ENCODE measurements at regions of chr17 and their contacts with region 1.

Region 1: GRCh38 chr17:3636154-3636907 is at the starts of genes CTNS and SHPK:
- DNase-seq: peak; percentile 96
- H3K4me3 Mint-ChIP-seq: peak within 1 kb of the TSS; percentile 96
- H3K27ac Mint-ChIP-seq: peak within 1 kb of the TSS; percentile 98
- H3K4me1 Mint-ChIP-seq: peaks cover 49% of the 10 kb centered on the region
- H3K27me3 Mint-ChIP-seq: no peaks in the 10 kb centered on the region
- total RNA-seq, gene CTNS: 24.5 to 26.5 TPM
- total RNA-seq, gene SHPK: 10.4 TPM

Region 2: DNA sequence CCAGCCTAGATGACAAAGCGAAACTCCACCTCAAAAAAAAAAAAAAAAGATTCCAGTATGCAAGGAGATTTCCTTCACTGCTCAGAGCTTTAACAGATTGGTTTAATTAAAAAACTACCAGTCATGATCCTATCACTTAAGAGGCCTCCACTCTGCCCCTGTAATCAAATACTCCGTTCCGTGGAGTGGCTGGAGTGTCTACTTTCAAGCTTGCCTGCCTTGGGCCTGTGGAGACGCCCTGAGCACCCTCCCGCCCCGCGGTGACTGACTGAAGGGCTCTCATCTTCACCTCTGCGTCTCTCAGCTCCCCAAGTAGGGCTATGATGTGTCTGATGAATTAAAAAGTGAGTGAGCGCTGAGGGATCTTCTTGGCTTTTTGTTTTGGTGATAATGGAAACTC is 53.4 kb before region 1 on chr17:
- CTCF ChIA-PET with region 1: no interaction called
- POLR2A ChIA-PET with region 1: no interaction called
- DNase-seq: no peak
- H3K4me3 Mint-ChIP-seq: no peak overlapping the region
- H3K27ac Mint-ChIP-seq: no peak overlapping the region
- H3K4me1 Mint-ChIP-seq: no peaks in the 10 kb centered on the region
- H3K27me3 Mint-ChIP-seq: no peaks in the 10 kb centered on the region

Region 3: DNA sequence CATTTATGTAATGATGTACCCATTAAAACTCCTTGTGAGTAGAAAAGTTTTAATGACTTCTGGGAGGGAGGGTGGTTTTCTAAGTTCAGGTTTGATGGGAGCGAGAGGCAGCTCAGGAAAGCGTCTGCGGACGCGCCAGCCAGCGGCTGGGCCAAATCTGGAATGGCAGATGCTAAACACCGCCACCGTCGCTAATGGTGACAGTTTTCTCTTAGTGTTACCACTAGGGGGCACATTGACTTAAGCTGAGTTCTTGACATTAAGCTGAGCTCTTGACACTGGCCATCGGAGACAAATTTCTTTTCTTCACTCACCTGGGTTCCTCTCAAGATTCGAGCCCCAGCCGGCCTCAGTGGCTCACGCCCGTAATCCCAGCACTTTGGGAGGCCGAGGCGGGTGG is 33.8 kb before region 1 on chr17:
- CTCF ChIA-PET with region 1: interaction called, 25 read pairs
- POLR2A ChIA-PET with region 1: no interaction called
- DNase-seq: peak; percentile 36
- H3K4me3 Mint-ChIP-seq: no peak overlapping the region
- H3K27ac Mint-ChIP-seq: no peak overlapping the region
- H3K4me1 Mint-ChIP-seq: peaks cover 2% of the 10 kb centered on the region
- H3K27me3 Mint-ChIP-seq: no peaks in the 10 kb centered on the region

Region 4: GRCh38 chr17:3647769-3648555 is 11.6 kb after region 1 on chr17:
- CTCF ChIA-PET with region 1: interaction called, 22 read pairs
- POLR2A ChIA-PET with region 1: interaction called, 10 read pairs
- DNase-seq: peak; percentile 65
- H3K4me3 Mint-ChIP-seq: no peak overlapping the region
- H3K27ac Mint-ChIP-seq: no peak overlapping the region
- H3K4me1 Mint-ChIP-seq: peaks cover 20% of the 10 kb centered on the region
- H3K27me3 Mint-ChIP-seq: no peaks in the 10 kb centered on the region

Region 5: GRCh38 chr17:3668279-3669085 is 32.2 kb after region 1 on chr17 and contains the starts of genes EMC6 and TAX1BP3:
- CTCF ChIA-PET with region 1: interaction called, 3 read pairs
- POLR2A ChIA-PET with region 1: interaction called, 16 read pairs
- DNase-seq: peak; percentile 99
- H3K4me3 Mint-ChIP-seq: peak within 1 kb of the TSS; percentile 96
- H3K27ac Mint-ChIP-seq: peak within 1 kb of the TSS; percentile 76
- H3K4me1 Mint-ChIP-seq: peaks cover 31% of the 10 kb centered on the region
- H3K27me3 Mint-ChIP-seq: no peaks in the 10 kb centered on the region
- total RNA-seq, gene EMC6: 40.4 to 41.6 TPM
- total RNA-seq, gene TAX1BP3: 23.2 to 25.0 TPM

Measured in activated CD4-positive, alpha-beta memory T cell treated with anti-CD3 and anti-CD28 coated beads, Interleukin-2, amount 10 ng/mL, durations not matched to agents 7 days and 5 days (primary cell).